Adrenal gland (tissue), 19 donors: ENCODE measurements at regions of chr1 and their contacts with region 1.

Region 1: DNA sequence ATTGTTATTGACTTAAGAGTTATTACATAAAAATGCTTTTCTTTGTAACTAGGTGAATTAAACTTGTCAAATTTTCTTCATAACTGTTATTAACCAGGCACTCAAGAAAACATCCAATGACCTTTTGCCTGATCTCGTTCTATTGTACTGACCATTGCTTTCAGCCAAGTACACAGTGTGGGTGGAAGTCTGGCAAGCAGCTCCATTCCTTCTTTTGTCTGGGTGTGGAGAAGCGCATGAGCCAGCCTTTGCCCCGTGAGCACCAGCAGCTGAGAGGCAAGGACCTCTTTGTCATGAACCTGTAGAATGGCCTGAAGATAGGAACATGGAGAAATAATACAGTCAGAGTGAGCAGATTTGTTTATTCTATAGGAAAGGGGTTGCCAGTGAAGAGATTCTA is 57.5 kb downstream of the IARS2 start:
- DNase-seq: peak in 3 of 7 donors; percentile 12 to 48 (median 22)
- H3K4me3 ChIP-seq: no peak overlapping the region
- H3K27ac ChIP-seq: peak overlapping the region in 1 of 5 donors; percentile 50
- H3K4me1 ChIP-seq: peaks cover 0 to 5% of the 10 kb centered on the region in 2 donors
- H3K27me3 ChIP-seq: no peaks in the 10 kb centered on the region
- CTCF ChIP-seq: no peak
- POLR2A ChIP-seq: no peak

Region 2: GRCh38 chr1:220076861-220077762 is 74.3 kb before region 1 on chr1:
- intact Hi-C with region 1: no loop called
- DNase-seq: no peak
- H3K4me3 ChIP-seq: no peak overlapping the region
- H3K27ac ChIP-seq: no peak overlapping the region
- H3K4me1 ChIP-seq: no peaks in the 10 kb centered on the region
- H3K27me3 ChIP-seq: no peaks in the 10 kb centered on the region
- CTCF ChIP-seq: no peak
- POLR2A ChIP-seq: no peak

Region 3: DNA sequence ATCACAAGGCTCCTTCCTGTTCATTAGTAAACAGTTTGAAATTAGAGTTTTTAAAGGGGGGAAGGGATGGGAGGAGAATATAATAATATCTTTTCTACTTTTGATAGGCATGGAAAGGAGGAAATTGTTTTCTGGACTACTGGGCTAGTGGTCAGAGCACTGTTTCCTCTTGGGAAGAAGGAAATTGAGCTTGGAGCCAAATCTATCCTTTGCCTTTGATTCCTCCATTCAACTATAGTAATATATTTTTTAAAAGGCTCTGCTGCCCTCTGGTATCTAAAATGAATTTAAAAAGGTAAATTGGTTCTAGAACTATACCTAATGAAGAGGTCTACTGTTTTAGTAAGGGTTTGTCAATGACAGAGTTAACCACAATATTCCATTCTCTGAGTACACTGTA is 51.6 kb before region 1 on chr1:
- intact Hi-C with region 1: loop called in 1 of 2 experiments (anchors 10 kb)
- DNase-seq: no peak
- H3K4me3 ChIP-seq: no peak overlapping the region
- H3K27ac ChIP-seq: no peak overlapping the region
- H3K4me1 ChIP-seq: peaks cover 2 to 6% of the 10 kb centered on the region in 2 donors
- H3K27me3 ChIP-seq: no peaks in the 10 kb centered on the region
- CTCF ChIP-seq: no peak
- POLR2A ChIP-seq: no peak